Activated CD4-positive, alpha-beta memory T cell treated with anti-CD3 and anti-CD28 coated beads, Interleukin-2, amount 10 ng/mL, durations not matched to agents 7 days and 5 days (primary cell): ENCODE measurements at regions of chr10 and their contacts with region 1.

Region 1: GRCh38 chr10:63629363-63630084 is 108.3 kb downstream of the REEP3 start:
- DNase-seq: peak; percentile 83
- H3K4me3 Mint-ChIP-seq: peak overlapping the region; percentile 83
- H3K27ac Mint-ChIP-seq: peak overlapping the region; percentile 81
- H3K4me1 Mint-ChIP-seq: peaks cover 44% of the 10 kb centered on the region
- H3K27me3 Mint-ChIP-seq: peaks cover 7% of the 10 kb centered on the region

Region 2: DNA sequence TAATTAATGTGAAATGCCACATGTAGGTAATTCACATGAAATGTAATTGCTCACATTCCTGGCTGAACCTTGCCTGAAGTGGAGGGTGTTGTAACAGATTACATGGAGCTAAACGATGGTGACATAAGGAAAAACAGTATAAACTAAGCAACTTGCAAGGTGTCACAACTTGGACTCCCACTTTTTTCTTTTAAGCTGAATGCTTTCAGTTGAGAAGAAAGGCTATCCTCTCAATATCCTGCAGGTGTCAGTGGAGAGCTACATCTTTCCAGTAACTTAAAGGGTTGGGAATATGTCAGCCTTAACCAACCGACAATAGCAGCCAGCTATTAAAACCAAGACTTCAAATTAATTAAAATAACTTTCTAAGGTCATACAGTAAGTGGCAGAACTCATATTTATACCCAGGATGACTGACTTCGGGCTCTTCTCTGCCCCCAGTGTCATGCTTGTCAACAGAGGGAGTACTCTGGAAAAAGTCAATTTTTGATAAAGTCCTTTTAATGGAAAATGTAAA is 462.7 kb before region 1 on chr10:
- CTCF ChIA-PET with region 1: interaction called, 86 read pairs
- POLR2A ChIA-PET with region 1: interaction called, 19 read pairs
- DNase-seq: no peak
- H3K4me3 Mint-ChIP-seq: no peak overlapping the region
- H3K27ac Mint-ChIP-seq: no peak overlapping the region
- H3K4me1 Mint-ChIP-seq: peaks cover 35% of the 10 kb centered on the region
- H3K27me3 Mint-ChIP-seq: no peaks in the 10 kb centered on the region

Region 3: DNA sequence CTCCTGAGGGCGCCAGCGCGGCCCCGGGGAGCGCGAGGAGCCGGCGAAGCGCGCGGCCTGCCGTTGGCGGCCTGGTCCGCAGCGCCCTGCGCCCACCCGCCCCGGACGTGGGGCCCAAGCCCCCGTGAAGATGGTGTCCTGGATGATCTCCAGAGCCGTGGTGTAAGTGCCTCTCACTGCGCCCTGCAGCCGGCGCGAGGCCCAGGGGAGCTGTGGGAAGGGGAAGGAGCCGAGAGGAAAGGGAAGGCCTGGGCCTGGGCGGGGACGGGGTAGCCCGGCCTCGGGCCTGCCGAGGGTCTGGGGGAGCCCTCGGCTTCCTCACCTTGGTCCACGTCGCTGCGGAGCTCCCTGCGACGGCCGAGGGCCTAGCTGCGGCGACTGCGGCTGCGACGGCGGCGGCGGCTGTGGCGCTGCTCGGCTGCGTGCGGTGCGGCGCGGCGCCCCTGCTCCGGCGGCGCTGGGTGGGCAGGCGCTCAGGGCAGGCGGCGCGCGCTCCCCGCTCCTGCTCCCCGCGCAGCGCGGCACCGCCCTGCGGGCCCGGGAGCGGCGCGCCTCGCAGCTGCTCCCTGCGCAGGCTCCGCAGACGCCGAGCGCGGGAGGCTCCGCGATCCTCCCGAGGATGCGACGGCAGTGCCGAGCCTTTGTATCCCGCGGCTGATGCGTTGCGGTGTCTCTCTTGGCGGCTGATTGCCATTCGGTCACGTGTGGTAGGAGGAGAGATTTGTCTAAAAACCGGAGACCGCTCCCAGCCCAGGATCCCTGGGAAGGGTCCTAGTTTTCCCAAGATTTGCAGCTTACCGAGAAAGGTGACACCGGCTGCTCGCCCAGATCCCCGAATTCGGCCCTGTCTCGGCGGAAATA is 107.9 kb before region 1 on chr10:
- CTCF ChIA-PET with region 1: interaction called, 15 read pairs
- POLR2A ChIA-PET with region 1: interaction called, 29 read pairs
- DNase-seq: peak; percentile 60
- H3K4me3 Mint-ChIP-seq: peak overlapping the region; percentile 76
- H3K27ac Mint-ChIP-seq: peak overlapping the region; percentile 87
- H3K4me1 Mint-ChIP-seq: peaks cover 64% of the 10 kb centered on the region
- H3K27me3 Mint-ChIP-seq: no peaks in the 10 kb centered on the region

Region 4: DNA sequence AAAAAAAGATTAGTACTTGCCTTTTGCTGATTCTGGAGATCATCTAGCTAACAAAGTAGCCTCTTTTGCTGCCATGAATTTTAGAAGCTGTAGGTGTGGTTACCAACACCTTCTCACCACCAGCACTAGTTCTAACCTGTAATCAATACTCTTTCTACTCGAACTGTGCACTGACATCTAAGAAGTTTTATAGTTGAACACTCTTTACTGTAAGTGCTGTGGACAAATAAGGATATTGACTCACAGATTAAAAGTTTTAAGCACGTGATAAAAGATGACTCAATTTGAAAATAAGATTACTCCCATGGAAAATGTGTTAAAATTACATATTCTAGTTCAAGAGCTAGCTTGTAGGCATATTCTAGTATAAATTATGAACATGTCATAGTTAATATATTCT is 18.4 kb before region 1 on chr10:
- CTCF ChIA-PET with region 1: interaction called, 12 read pairs
- POLR2A ChIA-PET with region 1: interaction called, 13 read pairs
- DNase-seq: no peak
- H3K4me3 Mint-ChIP-seq: no peak overlapping the region
- H3K27ac Mint-ChIP-seq: no peak overlapping the region
- H3K4me1 Mint-ChIP-seq: peaks cover 11% of the 10 kb centered on the region
- H3K27me3 Mint-ChIP-seq: no peaks in the 10 kb centered on the region

Region 5: DNA sequence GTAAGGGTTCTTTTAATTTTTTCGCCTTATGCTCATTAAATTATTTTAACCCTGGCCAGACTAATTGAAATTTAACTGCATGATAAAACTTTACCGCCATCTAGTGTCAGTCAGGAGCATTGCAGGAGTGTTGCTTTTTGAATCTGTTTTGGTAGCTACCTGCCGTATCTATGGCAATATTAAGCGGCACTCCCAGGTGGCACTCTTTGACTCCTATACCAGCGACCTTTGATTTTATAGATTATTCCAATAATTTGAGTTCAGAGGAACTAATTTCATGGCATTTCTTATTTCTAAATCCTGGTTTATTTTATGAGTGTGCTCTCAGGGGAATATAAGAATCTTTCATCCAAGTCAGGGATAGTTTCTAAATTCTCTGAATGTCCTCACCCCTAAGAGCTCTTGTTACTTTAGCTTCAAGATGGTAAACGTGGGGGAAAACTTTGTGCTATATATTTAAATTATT is 90.6 kb after region 1 on chr10:
- CTCF ChIA-PET with region 1: interaction called, 76 read pairs
- POLR2A ChIA-PET with region 1: interaction called, 4 read pairs
- DNase-seq: peak; percentile 47
- H3K4me3 Mint-ChIP-seq: no peak overlapping the region
- H3K27ac Mint-ChIP-seq: no peak overlapping the region
- H3K4me1 Mint-ChIP-seq: peaks cover 28% of the 10 kb centered on the region
- H3K27me3 Mint-ChIP-seq: peaks cover 8% of the 10 kb centered on the region

Region 6: GRCh38 chr10:63922468-63923314 is 293.2 kb after region 1 on chr10:
- CTCF ChIA-PET with region 1: no interaction called
- POLR2A ChIA-PET with region 1: no interaction called
- DNase-seq: no peak
- H3K4me3 Mint-ChIP-seq: no peak overlapping the region
- H3K27ac Mint-ChIP-seq: no peak overlapping the region
- H3K4me1 Mint-ChIP-seq: no peaks in the 10 kb centered on the region
- H3K27me3 Mint-ChIP-seq: peaks cover 9% of the 10 kb centered on the region